Thyroid gland (tissue), 4 donors: ENCODE measurements at regions of chr1 and their contacts with region 1.

Region 1: GRCh38 chr1:31789259-31790065 is 25.3 kb upstream of the ADGRB2 start:
- DNase-seq: peak; percentile 95 to 96
- H3K4me3 ChIP-seq: peak overlapping the region in 1 of 3 donors; percentile 46
- H3K27ac ChIP-seq: peak overlapping the region in 2 of 3 donors; percentile 64 to 81
- H3K4me1 ChIP-seq: peaks cover 0 to 4% of the 10 kb centered on the region in 2 donors
- H3K27me3 ChIP-seq: no peaks in the 10 kb centered on the region
- CTCF ChIP-seq: peak; percentile 73 to 99 (median 92)
- POLR2A ChIP-seq: no peak

Region 2: DNA sequence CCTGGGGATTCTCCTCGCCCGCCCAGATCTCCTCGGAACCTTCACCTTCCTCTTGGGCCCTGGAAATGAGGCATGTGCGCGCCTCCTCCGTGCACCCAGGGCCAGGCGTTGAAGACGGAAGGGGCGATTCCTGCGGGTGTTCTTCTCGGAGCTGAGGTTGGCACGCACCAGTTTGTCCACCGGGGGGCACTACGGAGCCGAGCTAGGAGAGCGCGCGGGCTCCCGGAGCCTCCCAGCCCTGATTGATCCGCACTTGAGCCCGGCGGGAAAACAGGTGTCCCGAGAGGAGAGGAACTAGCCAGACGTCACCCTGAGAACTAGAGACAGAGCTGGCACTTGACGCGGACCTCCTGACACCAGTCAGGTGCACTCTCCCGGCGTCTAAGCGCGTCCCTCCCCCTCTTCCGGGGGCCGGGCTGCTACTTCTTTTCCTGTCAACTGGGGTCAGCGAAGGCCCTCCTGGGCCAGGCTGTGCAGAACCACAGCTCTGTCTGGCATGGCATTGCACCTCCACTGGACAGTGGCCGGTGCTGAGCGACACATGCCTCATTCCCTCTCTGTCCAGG is 394.8 kb before region 1 on chr1:
- intact Hi-C with region 1: loop called (anchors 10 kb)
- DNase-seq: peak; percentile 94
- H3K4me3 ChIP-seq: no peak overlapping the region
- H3K27ac ChIP-seq: peak overlapping the region; percentile 17 to 37 (median 35)
- H3K4me1 ChIP-seq: peaks cover 0 to 8% of the 10 kb centered on the region in 2 donors
- H3K27me3 ChIP-seq: no peaks in the 10 kb centered on the region
- CTCF ChIP-seq: peak; percentile 67 to 89 (median 82)
- POLR2A ChIP-seq: no peak

Region 3: DNA sequence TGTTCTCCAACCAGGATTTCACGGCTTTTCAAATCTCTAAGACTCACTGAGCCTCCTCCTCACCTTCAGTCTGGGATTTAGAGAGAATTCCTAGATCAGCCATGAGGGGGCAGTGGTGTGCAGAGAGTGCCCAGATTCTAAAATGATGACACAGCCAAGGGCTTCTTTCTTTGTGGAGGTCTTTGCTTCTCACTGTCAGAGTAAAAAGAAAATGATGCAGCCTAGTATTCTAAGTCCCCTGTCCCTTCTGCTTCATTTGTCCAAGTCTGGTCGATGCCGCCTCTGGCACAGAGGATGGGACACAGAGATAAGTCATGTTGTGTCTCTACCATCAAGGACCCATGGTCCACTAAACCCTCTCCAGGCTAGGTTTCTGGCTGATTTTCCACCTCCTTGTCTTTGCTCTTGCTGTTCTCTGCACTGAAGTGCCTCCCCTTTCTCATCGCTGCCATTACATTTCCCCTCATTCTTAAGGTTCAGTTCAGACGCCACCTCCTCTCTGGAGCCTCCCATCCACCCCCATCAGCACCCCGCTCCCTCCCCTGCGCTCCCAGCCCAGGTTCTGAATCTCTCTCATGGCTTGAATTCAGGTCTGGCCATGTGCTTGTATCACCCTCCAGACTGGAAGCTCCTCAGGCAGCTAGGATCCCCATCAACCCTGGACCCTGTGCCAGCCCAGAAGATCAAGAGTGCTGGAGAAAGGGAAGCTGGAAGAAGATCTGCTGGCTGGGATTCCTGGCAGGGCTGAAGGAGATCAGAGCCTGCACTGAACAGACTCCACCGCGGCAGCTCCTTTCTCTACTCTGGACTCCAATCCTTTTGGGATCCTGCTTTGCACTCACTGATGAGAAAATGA is 225.1 kb before region 1 on chr1:
- intact Hi-C with region 1: loop called (anchors 10 kb)
- DNase-seq: peak; percentile 63 to 66
- H3K4me3 ChIP-seq: no peak overlapping the region
- H3K27ac ChIP-seq: peak overlapping the region; percentile 10 to 46 (median 14)
- H3K4me1 ChIP-seq: peaks cover 16 to 38% of the 10 kb centered on the region in 2 donors
- H3K27me3 ChIP-seq: no peaks in the 10 kb centered on the region
- CTCF ChIP-seq: peak; percentile 70 to 96 (median 92)
- POLR2A ChIP-seq: no peak

Region 4: GRCh38 chr1:31663622-31664452 is 125.6 kb before region 1 on chr1:
- intact Hi-C with region 1: loop called (anchors 2 kb)
- DNase-seq: peak; percentile 48 to 53
- H3K4me3 ChIP-seq: no peak overlapping the region
- H3K27ac ChIP-seq: peak overlapping the region in 2 of 3 donors; percentile 90 to 94
- H3K4me1 ChIP-seq: peaks cover 32 to 61% of the 10 kb centered on the region in 2 donors
- H3K27me3 ChIP-seq: no peaks in the 10 kb centered on the region
- CTCF ChIP-seq: peak; percentile 76 to 93 (median 92)
- POLR2A ChIP-seq: no peak

Region 5: GRCh38 chr1:31699341-31699891 is 90.0 kb before region 1 on chr1:
- intact Hi-C with region 1: no loop called
- DNase-seq: no peak
- H3K4me3 ChIP-seq: no peak overlapping the region
- H3K27ac ChIP-seq: no peak overlapping the region
- H3K4me1 ChIP-seq: peaks cover 18 to 49% of the 10 kb centered on the region in 2 donors
- H3K27me3 ChIP-seq: no peaks in the 10 kb centered on the region
- CTCF ChIP-seq: no peak
- POLR2A ChIP-seq: no peak

Region 6: GRCh38 chr1:31715087-31715872 is 74.2 kb before region 1 on chr1:
- intact Hi-C with region 1: loop called (anchors 5 kb)
- DNase-seq: peak; percentile 95 to 96
- H3K4me3 ChIP-seq: peak overlapping the region in 1 of 3 donors; percentile 20
- H3K27ac ChIP-seq: peak overlapping the region; percentile 74 to 94 (median 92)
- H3K4me1 ChIP-seq: peaks cover 34 to 44% of the 10 kb centered on the region in 2 donors
- H3K27me3 ChIP-seq: no peaks in the 10 kb centered on the region
- CTCF ChIP-seq: peak in 5 of 6 experiments; percentile 45 to 91 (median 81)
- POLR2A ChIP-seq: peak in 1 of 2 donors; percentile 91